ENCODE measurements at regions of chr3 and their contacts with region 1.

Region 1: DNA sequence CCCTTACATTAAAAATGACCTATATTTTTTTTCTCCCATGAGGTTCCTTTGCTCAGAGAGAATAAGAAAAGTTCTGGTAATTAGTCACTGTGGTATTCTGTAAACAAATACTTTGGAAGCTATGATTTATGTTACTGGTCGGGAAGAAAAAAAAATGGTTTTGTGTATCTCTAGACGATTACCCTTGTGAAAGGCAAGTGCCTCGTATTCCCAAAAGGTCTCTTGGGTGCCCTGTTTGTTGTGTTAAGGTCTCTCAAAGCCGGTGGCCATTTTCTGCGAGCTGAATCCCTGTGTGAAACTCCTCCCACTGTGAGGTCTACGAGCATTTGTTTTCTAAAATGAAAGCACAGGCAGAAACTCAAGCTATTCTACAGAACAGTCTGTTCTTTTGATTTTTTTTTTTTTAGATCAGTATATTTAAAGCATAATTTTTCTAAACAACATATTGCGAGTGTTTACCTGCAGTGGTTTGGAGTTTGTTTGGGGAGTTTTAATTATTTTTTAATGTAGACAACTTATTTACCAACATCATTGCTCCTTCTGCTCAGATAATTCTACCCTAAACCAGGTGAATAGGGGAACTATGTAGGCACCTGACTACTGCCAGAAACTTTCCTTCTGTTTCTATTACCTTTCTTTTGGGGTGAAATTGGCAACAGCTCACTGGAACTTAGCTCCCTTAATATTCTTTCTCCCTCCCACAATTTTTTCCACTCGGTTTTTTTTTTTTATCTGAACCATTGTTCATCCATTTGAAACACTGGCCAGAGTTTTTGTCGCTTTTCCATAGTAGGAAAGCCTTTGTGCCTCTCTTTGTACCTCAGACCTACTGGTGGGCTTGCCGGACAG is 44.0 kb downstream of the ZBTB38 start:
- DNase-seq: peak; percentile 60
- H3K4me3 Mint-ChIP-seq: peak overlapping the region; percentile 70
- H3K27ac Mint-ChIP-seq: peak overlapping the region; percentile 92
- H3K4me1 Mint-ChIP-seq: peaks cover 87% of the 10 kb centered on the region
- H3K27me3 Mint-ChIP-seq: no peaks in the 10 kb centered on the region

Region 2: GRCh38 chr3:141303481-141304223 is 108.7 kb before region 1 on chr3:
- CTCF ChIA-PET with region 1: interaction called, 5 read pairs
- POLR2A ChIA-PET with region 1: interaction called, 3 read pairs
- intact Hi-C with region 1: loop called (anchors 1 kb)
- DNase-seq: peak; percentile 56
- H3K4me3 Mint-ChIP-seq: no peak overlapping the region
- H3K27ac Mint-ChIP-seq: no peak overlapping the region
- H3K4me1 Mint-ChIP-seq: peaks cover 44% of the 10 kb centered on the region
- H3K27me3 Mint-ChIP-seq: no peaks in the 10 kb centered on the region

Region 3: DNA sequence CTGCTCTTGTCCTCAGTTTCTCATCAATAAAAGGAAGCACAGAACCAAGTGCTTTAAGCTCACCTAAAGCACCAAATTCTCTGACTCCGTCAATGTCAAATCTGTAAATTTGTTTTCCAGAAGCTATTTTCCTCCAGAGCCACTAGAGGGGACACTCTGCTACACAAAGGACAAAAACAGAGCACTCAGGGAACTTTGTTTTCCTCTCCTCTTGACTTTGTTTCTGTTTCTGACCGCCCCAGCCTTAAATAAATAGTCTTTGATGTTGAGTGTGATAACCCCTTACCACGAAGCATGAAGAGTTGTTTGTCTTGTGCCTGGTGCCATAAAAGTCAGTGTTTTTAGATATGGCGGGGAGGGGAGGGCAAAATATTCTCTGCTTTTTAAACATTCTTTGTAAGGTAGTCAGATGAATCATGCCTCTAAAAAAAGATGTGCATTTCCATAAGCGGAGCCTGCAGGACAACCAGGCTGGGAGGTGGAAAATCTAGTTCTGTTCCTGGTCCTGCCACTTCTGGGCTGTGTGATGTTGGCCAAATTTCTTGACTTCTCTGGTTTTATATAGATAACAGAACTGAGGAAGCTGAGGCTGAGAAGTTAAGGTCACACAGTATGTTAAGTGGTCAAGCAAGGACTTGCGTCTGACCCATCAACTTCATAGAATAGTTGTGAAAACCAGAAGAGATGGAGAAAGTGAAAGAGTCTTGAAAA is 51.3 kb before region 1 on chr3:
- CTCF ChIA-PET with region 1: interaction called, 14 read pairs
- POLR2A ChIA-PET with region 1: no interaction called
- intact Hi-C with region 1: no loop called
- DNase-seq: no peak
- H3K4me3 Mint-ChIP-seq: peak overlapping the region; percentile 30
- H3K27ac Mint-ChIP-seq: no peak overlapping the region
- H3K4me1 Mint-ChIP-seq: peaks cover 10% of the 10 kb centered on the region
- H3K27me3 Mint-ChIP-seq: peaks cover 1% of the 10 kb centered on the region

Region 4: DNA sequence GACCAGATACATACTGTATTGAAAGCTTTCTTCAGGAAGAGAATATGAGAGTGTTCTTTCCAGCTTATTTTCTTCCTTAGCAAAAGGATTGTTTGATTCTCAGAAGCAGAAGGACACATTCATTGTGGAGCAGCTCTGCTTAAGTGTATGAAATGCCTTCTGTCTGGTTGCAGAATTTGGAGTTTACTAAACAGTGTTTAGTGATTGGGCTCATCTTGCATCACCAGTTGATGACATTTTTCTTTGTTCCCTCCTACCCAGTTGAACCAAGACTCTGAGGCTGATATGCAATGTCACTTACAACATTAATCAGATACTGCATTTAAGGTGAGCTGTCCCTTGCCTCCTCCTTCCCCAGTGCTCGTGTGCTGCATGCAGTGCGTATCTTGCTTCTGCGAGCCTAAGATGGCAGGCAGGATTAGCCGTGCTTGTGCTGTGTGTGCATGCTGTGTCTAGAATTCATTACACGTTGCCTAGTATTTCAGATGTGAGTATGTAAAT is 25.6 kb before region 1 on chr3:
- CTCF ChIA-PET with region 1: interaction called, 8 read pairs
- POLR2A ChIA-PET with region 1: interaction called, 7 read pairs
- intact Hi-C with region 1: loop called (anchors 1 kb)
- DNase-seq: peak; percentile 31
- H3K4me3 Mint-ChIP-seq: peak overlapping the region; percentile 81
- H3K27ac Mint-ChIP-seq: peak overlapping the region; percentile 87
- H3K4me1 Mint-ChIP-seq: peaks cover 30% of the 10 kb centered on the region
- H3K27me3 Mint-ChIP-seq: peaks cover 5% of the 10 kb centered on the region

Region 5: DNA sequence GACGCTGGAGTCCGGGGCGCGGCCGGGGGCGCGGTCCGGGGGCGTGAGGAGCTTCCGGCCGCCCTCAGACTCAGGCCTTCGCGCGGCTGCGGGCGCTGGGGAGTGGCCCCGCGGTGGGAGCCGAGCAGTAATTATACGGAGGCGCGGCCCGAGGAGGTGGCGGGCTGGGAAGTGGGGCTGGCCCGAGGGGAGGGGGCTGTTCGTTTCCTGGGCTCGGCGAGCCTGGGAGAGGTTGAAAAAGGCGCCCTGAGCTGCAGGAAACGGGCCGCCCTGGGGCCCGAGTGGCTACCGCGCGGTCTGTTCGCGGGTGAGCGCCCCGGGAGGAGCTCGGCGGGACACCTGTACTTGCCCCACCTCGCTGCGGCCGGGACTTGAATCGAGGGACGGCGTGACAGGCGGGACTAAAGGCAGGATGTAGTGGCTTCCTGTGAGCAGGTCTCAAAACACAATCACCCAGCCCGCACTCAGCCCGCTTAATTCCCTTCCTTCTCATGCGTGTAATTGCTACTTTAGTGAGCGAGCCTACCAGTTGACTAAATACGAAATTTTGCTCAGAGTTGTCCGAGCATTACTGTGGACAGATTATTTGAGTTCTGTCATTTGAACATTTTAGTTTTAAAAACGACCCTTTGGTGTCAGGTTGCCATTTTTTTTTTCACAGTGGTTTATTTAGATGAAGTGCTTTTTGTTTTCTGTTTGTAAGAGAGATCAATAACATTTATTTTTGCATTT is 75.4 kb after region 1 on chr3:
- CTCF ChIA-PET with region 1: no interaction called
- POLR2A ChIA-PET with region 1: interaction called, 4 read pairs
- intact Hi-C with region 1: loop called (anchors 2 kb)
- DNase-seq: peak; percentile 94
- H3K4me3 Mint-ChIP-seq: peak overlapping the region; percentile 84
- H3K27ac Mint-ChIP-seq: peak overlapping the region; percentile 94
- H3K4me1 Mint-ChIP-seq: peaks cover 67% of the 10 kb centered on the region
- H3K27me3 Mint-ChIP-seq: no peaks in the 10 kb centered on the region

Measured in activated CD4-positive, alpha-beta memory T cell treated with anti-CD3 and anti-CD28 coated beads for 36 hours (primary cell).